ENCODE measurements at regions of chr16 and their contacts with region 1.

Region 1: DNA sequence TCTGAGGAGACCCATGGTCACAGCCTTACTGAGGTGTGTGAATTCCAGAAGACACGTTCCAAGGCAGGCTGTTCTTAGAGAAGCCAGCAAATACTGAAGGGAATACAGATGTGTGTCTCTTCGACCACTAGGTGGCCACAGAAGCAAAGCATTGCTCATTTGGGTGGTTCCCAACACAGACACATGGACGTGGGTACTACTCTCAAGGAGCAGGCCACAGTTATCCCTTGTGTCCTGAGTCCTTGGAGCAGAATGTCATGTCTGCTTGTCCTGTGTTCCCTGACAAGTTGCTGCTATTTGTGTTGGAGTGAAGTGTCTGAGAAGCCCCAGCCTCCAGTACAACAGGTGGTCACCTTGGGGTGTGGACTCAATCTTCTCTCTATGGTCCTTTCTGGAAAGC is 30.3 kb downstream of the HMOX2 start:
- DNase-seq: peak; percentile 75
- H3K4me3 Mint-ChIP-seq: peak overlapping the region; percentile 61
- H3K27ac Mint-ChIP-seq: peak overlapping the region; percentile 98
- H3K4me1 Mint-ChIP-seq: peaks cover 61% of the 10 kb centered on the region
- H3K27me3 Mint-ChIP-seq: no peaks in the 10 kb centered on the region

Region 2: DNA sequence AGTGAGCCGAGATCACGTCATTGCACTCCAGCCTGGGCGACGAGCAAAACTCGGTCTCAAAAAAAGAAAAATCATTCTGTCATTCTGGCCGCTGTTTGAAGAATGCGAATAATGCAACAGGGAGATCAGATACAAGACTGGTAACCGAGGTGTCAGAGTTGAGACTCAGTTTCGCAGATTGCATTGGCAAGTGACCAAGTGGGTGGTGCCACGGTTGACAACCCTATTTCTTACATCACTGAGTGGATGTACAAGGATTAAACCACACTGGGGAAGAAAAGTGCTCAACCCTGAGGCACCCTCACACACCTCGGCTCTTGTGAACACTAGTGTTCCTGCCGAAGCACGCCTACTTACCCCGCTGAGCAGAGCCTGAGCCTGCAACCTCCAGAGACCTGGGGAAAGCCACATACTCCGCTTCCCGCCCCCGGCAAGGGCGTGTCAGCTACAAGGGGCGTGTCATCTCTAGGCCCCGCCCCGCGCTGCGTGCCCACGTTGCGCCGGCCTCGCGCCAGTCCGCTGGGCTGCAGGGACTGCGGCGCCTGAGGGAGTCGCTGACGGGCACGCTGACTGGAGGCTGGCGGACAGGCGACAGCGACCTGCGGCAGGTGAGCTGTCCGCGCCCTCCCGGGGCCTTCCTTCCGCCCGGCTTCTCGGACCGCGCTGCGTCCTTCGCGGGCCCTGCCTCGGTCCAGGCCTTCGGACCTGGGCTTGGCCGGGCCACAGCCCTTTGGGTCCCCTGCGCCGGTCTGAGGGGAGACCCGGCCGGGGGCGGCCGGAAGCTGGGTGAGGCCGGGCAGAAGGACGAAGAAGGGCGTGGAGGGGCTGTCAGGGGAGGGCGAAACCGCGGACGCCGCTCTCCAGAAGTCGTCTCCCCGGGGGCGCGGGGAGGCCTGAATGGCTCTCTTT is 30.3 kb before region 1 on chr16 and contains the start of gene HMOX2:
- CTCF ChIA-PET with region 1: interaction called, 18 read pairs
- POLR2A ChIA-PET with region 1: no interaction called
- DNase-seq: peak; percentile 92
- H3K4me3 Mint-ChIP-seq: peak within 1 kb of the TSS; percentile 94
- H3K27ac Mint-ChIP-seq: peak within 1 kb of the TSS; percentile 90
- H3K4me1 Mint-ChIP-seq: peaks cover 40% of the 10 kb centered on the region
- H3K27me3 Mint-ChIP-seq: no peaks in the 10 kb centered on the region
- total RNA-seq, gene HMOX2: 86.3 to 107 TPM

Region 3: DNA sequence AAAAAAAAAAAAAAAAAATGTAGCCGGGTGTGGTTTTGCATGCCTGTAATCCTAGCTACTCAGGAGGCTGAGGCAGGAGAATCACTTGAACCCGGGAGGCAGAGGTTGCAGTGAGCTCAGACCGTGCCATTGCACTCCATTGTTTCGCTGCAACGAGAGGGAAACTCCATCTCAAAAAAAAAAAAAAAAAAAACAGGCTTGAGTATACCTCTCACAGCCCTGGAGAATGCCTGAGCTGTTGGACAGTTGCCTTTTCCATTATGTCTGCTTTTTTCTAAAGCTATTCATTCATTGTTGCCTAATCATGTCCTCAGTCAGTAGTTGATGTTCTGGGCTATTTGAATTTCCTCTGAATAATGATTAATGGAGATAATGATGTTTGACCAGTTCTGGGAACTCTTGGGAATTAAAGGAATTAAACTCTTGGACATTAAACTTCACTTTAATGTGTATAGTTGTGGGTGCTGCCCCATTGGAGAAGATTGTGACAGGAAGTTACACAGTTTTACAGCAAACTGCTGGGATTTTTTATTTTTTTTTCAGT is 18.4 kb before region 1 on chr16:
- CTCF ChIA-PET with region 1: interaction called, 36 read pairs
- POLR2A ChIA-PET with region 1: no interaction called
- DNase-seq: no peak
- H3K4me3 Mint-ChIP-seq: peak overlapping the region; percentile 64
- H3K27ac Mint-ChIP-seq: peak overlapping the region; percentile 96
- H3K4me1 Mint-ChIP-seq: peaks cover 66% of the 10 kb centered on the region
- H3K27me3 Mint-ChIP-seq: no peaks in the 10 kb centered on the region

Region 4: DNA sequence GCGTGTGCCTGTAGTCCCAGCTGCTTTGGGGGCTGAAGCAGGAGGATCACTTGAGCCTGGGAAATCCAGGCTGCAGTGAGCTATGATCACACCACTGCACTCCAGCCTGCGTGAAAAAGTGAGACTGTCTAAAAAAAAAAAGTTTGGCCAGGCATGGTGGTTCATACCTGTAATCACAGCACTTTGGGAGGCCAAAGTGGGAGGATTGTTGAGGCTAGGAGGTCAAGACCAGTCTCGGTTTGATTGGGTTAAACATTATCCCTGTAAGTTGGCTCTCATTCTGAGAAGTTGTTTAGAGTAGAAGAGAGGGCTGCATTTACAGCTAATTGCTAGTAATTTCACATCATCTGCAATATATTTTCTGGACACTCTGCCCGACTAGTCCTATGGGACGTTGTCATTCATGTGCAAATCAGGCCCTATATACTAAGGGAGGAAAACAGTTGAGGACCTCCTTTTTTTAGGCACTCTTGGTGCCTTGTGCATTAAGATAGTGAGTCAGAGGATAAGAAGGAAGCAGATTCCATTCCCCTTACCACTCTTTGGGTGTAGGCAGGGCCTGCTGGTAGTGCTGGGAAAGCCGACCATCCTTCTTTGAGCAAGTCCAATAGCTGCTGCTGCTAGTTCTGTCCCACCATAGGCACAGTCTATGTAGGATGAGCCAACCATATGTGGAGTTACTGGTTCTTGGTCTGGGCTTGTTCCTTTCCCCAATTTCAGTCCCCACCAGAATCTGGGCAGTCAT is 11.5 kb before region 1 on chr16:
- CTCF ChIA-PET with region 1: interaction called, 36 read pairs
- POLR2A ChIA-PET with region 1: no interaction called
- DNase-seq: no peak
- H3K4me3 Mint-ChIP-seq: no peak overlapping the region
- H3K27ac Mint-ChIP-seq: no peak overlapping the region
- H3K4me1 Mint-ChIP-seq: peaks cover 74% of the 10 kb centered on the region
- H3K27me3 Mint-ChIP-seq: no peaks in the 10 kb centered on the region

Region 5: GRCh38 chr16:4538350-4539235 is 32.1 kb after region 1 on chr16 and contains the start of gene CDIP1:
- CTCF ChIA-PET with region 1: interaction called, 10 read pairs
- POLR2A ChIA-PET with region 1: no interaction called
- DNase-seq: peak; percentile 94
- H3K4me3 Mint-ChIP-seq: peak within 1 kb of the TSS; percentile 77
- H3K27ac Mint-ChIP-seq: peak within 1 kb of the TSS; percentile 90
- H3K4me1 Mint-ChIP-seq: peaks cover 47% of the 10 kb centered on the region
- H3K27me3 Mint-ChIP-seq: peaks cover 1% of the 10 kb centered on the region
- total RNA-seq, gene CDIP1: 44.2 to 45.2 TPM

Region 6: GRCh38 chr16:4548124-4548523 is 41.7 kb after region 1 on chr16:
- CTCF ChIA-PET with region 1: interaction called, 19 read pairs
- POLR2A ChIA-PET with region 1: no interaction called
- DNase-seq: no peak
- H3K4me3 Mint-ChIP-seq: no peak overlapping the region
- H3K27ac Mint-ChIP-seq: no peak overlapping the region
- H3K4me1 Mint-ChIP-seq: peaks cover 10% of the 10 kb centered on the region
- H3K27me3 Mint-ChIP-seq: peaks cover 6% of the 10 kb centered on the region

Region 7: GRCh38 chr16:4688335-4689021 is 182.0 kb after region 1 on chr16:
- CTCF ChIA-PET with region 1: no interaction called
- POLR2A ChIA-PET with region 1: no interaction called
- DNase-seq: no peak
- H3K4me3 Mint-ChIP-seq: no peak overlapping the region
- H3K27ac Mint-ChIP-seq: no peak overlapping the region
- H3K4me1 Mint-ChIP-seq: peaks cover 11% of the 10 kb centered on the region
- H3K27me3 Mint-ChIP-seq: no peaks in the 10 kb centered on the region

Measured in activated CD4-positive, alpha-beta T cell treated with anti-CD3 and anti-CD28 coated beads, Interleukin-2, amount 10 ng/mL, durations not matched to agents 7 days and 5 days (primary cell).